Naive thymus-derived CD4-positive, alpha-beta T cell (primary cell): ENCODE measurements at regions of chr17 and their contacts with region 1.

Region 1: DNA sequence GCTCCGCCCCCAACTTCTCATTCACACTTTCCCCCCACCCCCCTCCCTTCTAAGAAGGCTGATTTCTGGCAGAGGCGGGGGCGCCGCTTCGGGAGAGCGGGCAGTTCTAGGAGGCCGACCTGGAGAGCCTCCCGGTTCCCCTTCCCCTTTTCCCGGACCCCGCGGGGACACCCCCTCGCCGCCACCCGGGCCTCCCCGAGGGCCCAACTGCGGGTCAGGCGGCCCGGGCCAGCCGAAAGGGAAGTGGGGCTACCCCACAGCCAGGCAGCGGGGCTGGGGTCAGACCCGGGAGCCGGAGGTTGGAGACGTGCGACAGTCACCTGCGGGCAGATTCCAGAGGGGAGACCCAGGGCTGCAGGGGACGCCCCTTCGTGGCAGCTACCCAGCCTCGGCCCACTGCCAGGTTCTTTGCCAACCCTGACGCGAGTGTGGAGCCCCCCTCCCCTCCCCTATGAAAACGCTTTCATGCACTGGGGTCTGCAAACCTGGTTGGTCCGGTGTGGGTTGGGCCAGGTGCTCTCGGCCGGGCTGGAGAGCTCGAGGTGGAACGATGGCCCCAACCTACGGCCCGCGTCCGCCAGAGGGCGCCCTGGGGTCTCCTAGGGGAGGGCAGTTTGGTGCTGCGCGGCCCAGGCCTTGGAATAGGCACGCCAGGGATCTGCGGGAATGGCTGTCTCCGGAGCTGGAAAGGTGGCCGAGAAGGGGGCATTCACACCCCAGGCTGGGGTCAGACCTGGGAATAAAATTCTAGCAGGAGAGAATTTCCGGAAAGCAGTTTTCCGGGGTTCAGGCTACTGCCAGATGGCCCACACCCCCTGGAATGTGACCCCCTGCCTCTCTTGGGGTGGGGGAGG is 721 bp upstream of the SOCS3 start:
- DNase-seq: peak; percentile 73 to 98 (median 83)
- ATAC-seq: peak; percentile 42
- H3K4me3 ChIP-seq: peak overlapping the region; percentile 47
- H3K4me3 Mint-ChIP-seq: peak overlapping the region; percentile 83 to 93 (median 88)
- H3K27ac ChIP-seq: peak overlapping the region; percentile 99
- H3K27ac Mint-ChIP-seq: peak overlapping the region; percentile 54 to 97 (median 93)
- H3K4me1 ChIP-seq: peaks cover 25 to 28% of the 10 kb centered on the region in 2 donors
- H3K4me1 Mint-ChIP-seq: peaks cover 13 to 46% (median 27%) of the 10 kb centered on the region in 7 donors
- H3K27me3 ChIP-seq: no peaks in the 10 kb centered on the region
- H3K27me3 Mint-ChIP-seq: peaks cover 0 to 2% (median 0%) of the 10 kb centered on the region in 5 donors

Region 2: GRCh38 chr17:78272181-78272913 is 88.3 kb before region 1 on chr17:
- CTCF ChIA-PET with region 1: interaction called, 3 read pairs
- POLR2A ChIA-PET with region 1: no interaction called
- intact Hi-C with region 1: loop called in 1 of 2 experiments (anchors 5 kb)
- DNase-seq: peak in 8 of 9 donors; percentile 50 to 93 (median 86)
- ATAC-seq: peak; percentile 93
- H3K4me3 ChIP-seq: no peak overlapping the region
- H3K4me3 Mint-ChIP-seq: peak overlapping the region; percentile 33 to 80 (median 72)
- H3K27ac ChIP-seq: peak overlapping the region; percentile 71
- H3K27ac Mint-ChIP-seq: peak overlapping the region; percentile 66 to 99 (median 94)
- H3K4me1 ChIP-seq: peaks cover 0 to 37% of the 10 kb centered on the region in 2 donors
- H3K4me1 Mint-ChIP-seq: peaks cover 20 to 61% (median 44%) of the 10 kb centered on the region in 7 donors
- H3K27me3 ChIP-seq: no peaks in the 10 kb centered on the region
- H3K27me3 Mint-ChIP-seq: peaks cover 0 to 5% (median 0%) of the 10 kb centered on the region in 5 donors

Region 3: DNA sequence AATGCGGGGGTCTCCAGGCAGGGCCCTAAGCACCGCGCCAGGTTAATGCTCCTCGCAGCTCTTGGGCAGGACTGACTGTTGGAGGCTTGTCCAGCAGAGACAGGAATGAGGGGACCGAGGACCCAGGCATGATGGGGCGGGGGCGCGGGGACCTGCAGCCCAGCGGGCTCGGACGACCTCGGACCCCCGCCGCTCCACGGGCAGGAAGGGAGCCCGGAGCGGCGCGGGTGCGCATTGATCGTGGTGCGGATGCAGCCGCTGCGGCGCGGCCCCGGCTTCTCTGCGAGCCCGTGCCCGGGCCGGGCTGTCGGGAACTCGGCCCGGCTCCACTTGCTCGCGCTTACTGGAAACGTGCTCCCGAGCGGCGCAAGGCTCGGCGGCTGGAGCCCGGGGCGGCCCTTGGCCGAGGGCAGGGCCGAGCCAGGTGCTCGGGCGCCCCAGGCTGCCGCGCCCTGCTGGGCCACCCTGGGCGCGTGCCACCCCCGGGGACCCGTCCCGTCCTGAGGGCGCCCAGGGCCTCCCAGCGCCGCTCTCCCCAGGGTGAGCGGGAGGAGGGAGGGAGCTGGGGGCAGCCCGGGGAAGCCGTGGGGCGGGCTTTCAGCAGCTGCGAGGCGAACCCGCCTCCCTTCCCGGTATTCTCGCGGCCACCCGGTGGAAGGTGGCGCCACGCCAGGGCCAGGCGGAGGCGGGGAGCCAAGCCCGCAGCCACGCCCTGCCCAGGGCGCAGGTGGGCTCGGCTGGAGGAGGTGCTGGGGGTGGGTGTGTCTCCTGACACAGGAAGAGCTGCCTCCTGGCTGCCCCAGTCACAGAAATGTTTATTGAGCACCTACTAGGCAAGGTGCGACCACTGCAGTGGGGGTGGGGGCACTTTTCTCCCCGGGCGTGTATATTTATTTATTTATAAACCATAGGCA is 46.6 kb before region 1 on chr17:
- CTCF ChIA-PET with region 1: interaction called, 8 read pairs
- POLR2A ChIA-PET with region 1: interaction called, 5 read pairs
- intact Hi-C with region 1: loop called (anchors 1 kb)
- DNase-seq: peak; percentile 47 to 78 (median 70)
- ATAC-seq: peak; percentile 79
- H3K4me3 ChIP-seq: peak overlapping the region; percentile 56
- H3K4me3 Mint-ChIP-seq: peak overlapping the region; percentile 68 to 89 (median 79)
- H3K27ac ChIP-seq: peak overlapping the region; percentile 59
- H3K27ac Mint-ChIP-seq: peak overlapping the region; percentile 77 to 94 (median 88)
- H3K4me1 ChIP-seq: peaks cover 22 to 36% of the 10 kb centered on the region in 2 donors
- H3K4me1 Mint-ChIP-seq: peaks cover 42 to 63% (median 56%) of the 10 kb centered on the region in 7 donors
- H3K27me3 ChIP-seq: no peaks in the 10 kb centered on the region
- H3K27me3 Mint-ChIP-seq: peaks cover 0 to 24% (median 0%) of the 10 kb centered on the region in 5 donors

Region 4: DNA sequence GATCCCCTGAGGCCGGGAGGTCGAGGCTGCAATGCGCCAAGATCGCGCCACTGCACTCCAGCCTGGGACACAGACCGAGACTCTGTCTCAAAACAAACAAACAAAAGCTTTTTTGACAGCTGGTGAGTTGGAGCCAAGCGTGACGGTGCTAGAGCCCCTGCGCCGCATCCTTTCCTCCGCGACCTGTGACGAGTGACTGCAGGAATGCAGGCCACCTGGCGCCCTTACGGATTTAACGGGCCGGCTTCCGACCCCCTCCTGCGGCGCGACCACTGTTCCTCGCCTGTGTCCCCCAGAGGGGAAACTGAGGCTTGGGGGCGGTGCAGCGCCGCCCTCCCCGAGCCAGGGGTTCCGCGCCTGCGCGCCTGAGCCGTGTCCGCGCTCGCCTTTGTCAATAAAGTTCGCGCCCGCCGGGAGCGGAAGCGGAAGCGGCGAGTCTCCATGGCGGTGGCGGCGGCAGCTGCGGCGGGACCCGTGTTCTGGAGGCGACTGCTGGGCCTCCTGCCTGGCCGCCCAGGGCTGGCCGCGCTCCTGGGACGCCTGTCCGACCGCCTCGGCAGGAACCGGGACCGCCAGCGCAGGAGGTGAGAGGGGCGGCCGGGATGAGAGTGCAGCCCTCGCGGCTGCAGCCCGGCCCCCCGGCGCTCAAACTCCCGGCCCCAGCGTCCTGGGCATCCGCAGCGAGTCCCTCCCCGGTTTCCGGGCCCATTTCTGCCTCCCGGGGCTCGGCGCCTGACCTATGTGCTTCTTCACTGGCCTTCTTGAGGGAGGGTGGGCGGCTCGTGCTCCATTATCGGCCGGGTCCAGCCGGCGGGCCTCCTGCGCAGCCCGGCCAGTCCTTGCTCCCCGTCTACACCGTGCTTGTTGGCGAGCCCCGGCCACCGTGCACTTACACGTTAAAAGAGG is 17.9 kb after region 1 on chr17 and contains the start of gene PGS1:
- CTCF ChIA-PET with region 1: interaction called, 6 read pairs
- POLR2A ChIA-PET with region 1: interaction called, 4 read pairs
- intact Hi-C with region 1: loop called (anchors 1 to 2 kb)
- DNase-seq: peak; percentile 76 to 91 (median 87)
- ATAC-seq: peak; percentile 70
- H3K4me3 ChIP-seq: peak within 1 kb of the TSS; percentile 82
- H3K4me3 Mint-ChIP-seq: peak within 1 kb of the TSS; percentile 65 to 96 (median 93)
- H3K27ac ChIP-seq: peak within 1 kb of the TSS; percentile 73
- H3K27ac Mint-ChIP-seq: peak within 1 kb of the TSS; percentile 87 to 93 (median 91)
- H3K4me1 ChIP-seq: peaks cover 35 to 44% of the 10 kb centered on the region in 2 donors
- H3K4me1 Mint-ChIP-seq: peaks cover 38 to 51% (median 42%) of the 10 kb centered on the region in 7 donors
- H3K27me3 ChIP-seq: no peaks in the 10 kb centered on the region
- H3K27me3 Mint-ChIP-seq: no peaks in the 10 kb centered on the region
- total RNA-seq, gene PGS1: 66.6 to 84.3 (median 82.0) TPM

Region 5: GRCh38 chr17:78421484-78422266 is 61.1 kb after region 1 on chr17:
- CTCF ChIA-PET with region 1: interaction called, 10 read pairs
- POLR2A ChIA-PET with region 1: interaction called, 4 read pairs
- intact Hi-C with region 1: loop called (anchors 1 kb)
- DNase-seq: peak; percentile 48 to 81 (median 64)
- ATAC-seq: peak; percentile 94
- H3K4me3 ChIP-seq: no peak overlapping the region
- H3K4me3 Mint-ChIP-seq: no peak overlapping the region
- H3K27ac ChIP-seq: no peak overlapping the region
- H3K27ac Mint-ChIP-seq: peak overlapping the region in 8 of 9 donors; percentile 11 to 69 (median 49)
- H3K4me1 ChIP-seq: peaks cover 0 to under 1% of the 10 kb centered on the region in 2 donors
- H3K4me1 Mint-ChIP-seq: peaks cover 9 to 52% (median 23%) of the 10 kb centered on the region in 7 donors
- H3K27me3 ChIP-seq: no peaks in the 10 kb centered on the region
- H3K27me3 Mint-ChIP-seq: no peaks in the 10 kb centered on the region

Region 6: GRCh38 chr17:78774956-78775571 is 414.5 kb after region 1 on chr17:
- CTCF ChIA-PET with region 1: no interaction called
- POLR2A ChIA-PET with region 1: no interaction called
- intact Hi-C with region 1: loop called in 1 of 2 experiments (anchors 5 kb)
- DNase-seq: peak in 7 of 9 donors; percentile 49 to 71 (median 55)
- ATAC-seq: peak; percentile 55
- H3K4me3 ChIP-seq: peak overlapping the region; percentile 55
- H3K4me3 Mint-ChIP-seq: peak overlapping the region in 8 of 10 donors; percentile 85 to 98 (median 92)
- H3K27ac ChIP-seq: peak overlapping the region; percentile 81
- H3K27ac Mint-ChIP-seq: peak overlapping the region in 8 of 9 donors; percentile 91 to 98 (median 97)
- H3K4me1 ChIP-seq: peaks cover 67 to 71% of the 10 kb centered on the region in 2 donors
- H3K4me1 Mint-ChIP-seq: peaks cover 34 to 79% (median 69%) of the 10 kb centered on the region in 7 donors
- H3K27me3 ChIP-seq: no peaks in the 10 kb centered on the region
- H3K27me3 Mint-ChIP-seq: no peaks in the 10 kb centered on the region